ENCODE measurements at regions of chr9 and their contacts with region 1.

Region 1: DNA sequence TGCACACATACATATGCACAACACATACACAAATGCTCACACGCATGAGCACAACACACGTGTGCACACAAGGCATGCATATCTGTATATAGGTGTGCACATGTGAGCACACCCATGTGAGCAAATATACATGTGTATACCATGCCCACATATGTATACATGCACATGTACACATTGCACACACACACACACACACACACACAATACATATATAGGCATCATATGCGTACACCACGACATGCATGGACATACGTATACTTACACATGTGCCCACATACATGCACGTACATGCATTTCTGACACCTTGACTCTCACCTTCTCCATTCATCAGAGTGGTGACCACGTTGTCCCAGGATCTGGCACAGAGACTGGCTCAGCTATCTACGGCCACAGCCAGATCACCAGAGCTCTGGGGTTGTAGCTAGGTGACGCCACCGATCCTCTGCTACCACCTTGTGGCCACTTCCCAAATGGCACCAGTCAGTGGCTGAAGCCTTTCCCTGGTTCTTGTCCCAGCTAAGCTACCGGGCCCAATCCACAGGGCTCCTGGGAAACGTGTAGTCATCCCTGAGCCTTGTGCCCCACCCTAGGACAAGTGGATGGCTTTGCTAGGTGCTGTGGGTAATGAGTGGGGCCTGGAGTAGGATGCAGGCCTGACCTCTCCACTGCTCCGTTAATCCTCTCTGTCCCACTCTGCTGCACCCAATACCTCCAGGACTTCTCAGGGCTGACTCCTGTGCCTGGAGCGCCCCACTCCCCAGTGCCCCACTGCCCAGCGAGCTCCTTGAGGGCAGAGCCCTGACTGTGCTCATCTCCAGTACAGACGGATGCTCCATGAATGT is 194.4 kb downstream of the RGS3 start:
- DNase-seq: peak; percentile 55
- H3K4me3 Mint-ChIP-seq: no peak overlapping the region
- H3K27ac Mint-ChIP-seq: no peak overlapping the region
- H3K4me1 Mint-ChIP-seq: no peaks in the 10 kb centered on the region
- H3K27me3 Mint-ChIP-seq: peaks cover 12% of the 10 kb centered on the region

Region 2: GRCh38 chr9:113309204-113309813 is 348.6 kb before region 1 on chr9:
- intact Hi-C with region 1: loop called (anchors 1 kb)
- DNase-seq: peak; percentile 10
- H3K4me3 Mint-ChIP-seq: no peak overlapping the region
- H3K27ac Mint-ChIP-seq: no peak overlapping the region
- H3K4me1 Mint-ChIP-seq: no peaks in the 10 kb centered on the region
- H3K27me3 Mint-ChIP-seq: peaks cover 8% of the 10 kb centered on the region

Region 3: DNA sequence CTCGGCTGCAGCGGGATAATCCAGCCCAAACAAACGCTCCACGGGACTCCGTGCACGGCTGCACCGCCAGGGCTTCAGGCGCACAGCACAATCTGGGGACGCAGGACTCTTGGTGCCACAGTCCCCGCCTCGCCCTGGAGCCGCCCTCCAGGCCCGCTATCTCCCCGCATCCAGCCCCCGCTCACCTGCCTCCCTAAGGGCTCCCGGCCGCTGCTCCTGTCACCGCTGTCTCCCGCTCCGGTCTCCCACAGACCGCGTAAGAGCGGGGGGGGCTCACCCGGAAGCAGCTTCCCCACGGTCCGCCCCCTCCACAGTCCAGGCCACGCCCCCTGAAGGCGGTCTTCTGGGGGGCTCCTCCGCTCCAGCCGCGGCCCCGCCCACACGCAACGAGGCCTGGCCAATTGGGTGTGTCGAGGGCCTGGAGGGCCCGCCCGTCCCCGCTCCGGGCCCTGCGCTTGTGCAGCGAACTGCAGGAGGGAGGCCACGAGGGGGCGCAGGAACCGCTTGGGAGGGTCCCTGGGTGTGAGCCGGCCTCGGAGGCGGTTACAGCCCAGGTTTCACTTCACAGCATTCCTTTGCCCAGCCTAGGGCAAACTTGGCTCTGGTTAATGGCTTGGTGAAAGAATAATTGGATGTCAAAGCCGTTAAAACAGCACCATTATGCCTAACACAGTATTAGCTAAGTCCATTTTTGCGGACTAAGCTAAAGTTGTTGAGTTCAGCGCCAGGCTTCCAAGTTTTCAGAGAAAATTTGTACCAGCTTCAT is 256.7 kb before region 1 on chr9 and contains the start of gene ALAD:
- intact Hi-C with region 1: loop called (anchors 1 kb)
- DNase-seq: peak; percentile 99
- H3K4me3 Mint-ChIP-seq: peak within 1 kb of the TSS; percentile 89
- H3K27ac Mint-ChIP-seq: peak within 1 kb of the TSS; percentile 67
- H3K4me1 Mint-ChIP-seq: peaks cover 25% of the 10 kb centered on the region
- H3K27me3 Mint-ChIP-seq: no peaks in the 10 kb centered on the region
- total RNA-seq, gene ALAD: 23.0 and 23.7 TPM in 2 replicates

Region 4: GRCh38 chr9:113446323-113446740 is 211.6 kb before region 1 on chr9:
- intact Hi-C with region 1: loop called (anchors 1 kb)
- DNase-seq: no peak
- H3K4me3 Mint-ChIP-seq: no peak overlapping the region
- H3K27ac Mint-ChIP-seq: peak overlapping the region; percentile 37
- H3K4me1 Mint-ChIP-seq: no peaks in the 10 kb centered on the region
- H3K27me3 Mint-ChIP-seq: no peaks in the 10 kb centered on the region

Region 5: DNA sequence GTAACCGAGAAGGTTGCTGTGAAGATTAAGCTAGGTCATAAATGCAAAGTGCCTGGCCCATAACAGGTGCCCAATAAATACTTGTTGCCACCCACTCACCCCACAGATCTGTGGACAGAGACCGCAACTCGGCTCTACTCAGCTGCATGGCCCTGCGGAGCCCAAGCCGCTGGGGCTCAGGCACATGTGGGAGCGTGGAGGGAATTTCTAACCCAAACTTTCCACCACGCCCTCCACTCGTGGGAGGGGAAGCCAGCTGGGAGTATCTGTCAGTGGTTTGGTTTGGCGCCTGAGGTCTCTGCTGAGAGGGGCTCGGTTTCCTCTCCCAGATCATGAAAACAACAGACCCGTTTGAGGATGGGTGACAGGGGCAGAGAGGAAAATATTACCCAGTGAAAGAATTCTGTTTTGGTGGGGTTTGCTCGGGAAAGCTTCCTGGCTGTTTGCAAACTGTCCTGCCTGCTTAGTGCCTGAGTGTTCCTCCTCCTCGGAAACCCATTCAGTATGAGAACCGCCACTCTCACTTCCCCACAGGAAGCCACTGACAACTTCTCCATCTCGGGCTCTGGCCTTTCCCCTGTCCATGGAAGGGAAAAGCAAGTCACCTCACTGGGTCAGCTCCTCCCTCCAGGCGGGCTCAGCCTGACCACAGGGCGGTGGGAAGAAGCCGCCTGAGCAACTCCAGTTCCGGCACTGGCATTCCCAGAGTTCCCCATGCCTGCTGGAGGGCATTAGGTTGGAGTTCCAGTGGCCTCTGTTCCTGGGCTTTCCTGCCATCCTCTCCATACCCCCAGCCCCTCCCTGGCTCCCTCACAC is 134.3 kb before region 1 on chr9:
- intact Hi-C with region 1: loop called (anchors 2 kb)
- DNase-seq: peak; percentile 54
- H3K4me3 Mint-ChIP-seq: peak overlapping the region; percentile 77
- H3K27ac Mint-ChIP-seq: peak overlapping the region; percentile 86
- H3K4me1 Mint-ChIP-seq: peaks cover 85% of the 10 kb centered on the region
- H3K27me3 Mint-ChIP-seq: peaks cover 2% of the 10 kb centered on the region

Region 6: GRCh38 chr9:113591001-113591898 is 66.7 kb before region 1 on chr9:
- intact Hi-C with region 1: loop called (anchors 1 kb)
- DNase-seq: peak; percentile 37
- H3K4me3 Mint-ChIP-seq: no peak overlapping the region
- H3K27ac Mint-ChIP-seq: peak overlapping the region; percentile 34
- H3K4me1 Mint-ChIP-seq: peaks cover 53% of the 10 kb centered on the region
- H3K27me3 Mint-ChIP-seq: no peaks in the 10 kb centered on the region

Region 7: DNA sequence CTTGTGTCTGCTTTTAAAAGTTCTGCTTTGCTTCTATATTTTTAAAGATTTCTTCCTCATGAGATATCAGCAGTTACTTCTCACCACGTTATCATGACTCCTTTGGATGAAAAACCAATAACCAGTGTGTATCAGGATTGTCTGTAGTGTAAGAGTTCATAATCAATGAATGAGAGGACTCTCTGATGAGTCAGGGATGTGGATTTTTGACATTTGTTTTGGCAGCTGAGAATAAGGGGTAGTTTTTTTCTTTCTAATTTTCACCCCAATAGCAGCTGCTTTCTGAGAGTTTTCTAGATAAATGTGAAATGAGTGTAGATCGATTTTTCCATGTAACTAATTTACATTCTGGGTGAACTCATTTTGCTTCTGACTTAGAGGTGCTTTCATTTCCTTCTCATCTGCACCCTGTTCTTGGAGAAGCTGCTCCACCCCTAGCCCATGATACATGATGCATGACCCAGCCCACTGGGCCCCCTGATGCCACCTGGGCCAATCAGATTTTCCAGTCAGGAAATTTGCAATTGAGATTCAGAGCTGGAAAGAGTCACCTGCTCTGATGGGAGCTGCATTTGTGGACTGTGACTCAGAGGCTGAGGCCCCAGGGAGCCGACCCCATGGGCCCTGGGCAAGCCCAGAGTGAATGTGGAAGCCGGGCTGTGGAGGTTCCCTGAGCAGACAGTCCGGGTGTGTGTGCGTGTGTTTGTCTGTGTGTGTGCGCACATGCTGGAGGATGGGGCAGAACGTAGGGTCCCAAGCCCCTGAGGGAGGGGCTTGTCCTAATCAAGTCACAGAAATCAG is 35.1 kb before region 1 on chr9:
- intact Hi-C with region 1: loop called (anchors 2 kb)
- DNase-seq: peak; percentile 18
- H3K4me3 Mint-ChIP-seq: peak overlapping the region; percentile 43
- H3K27ac Mint-ChIP-seq: peak overlapping the region; percentile 93
- H3K4me1 Mint-ChIP-seq: peaks cover 47% of the 10 kb centered on the region
- H3K27me3 Mint-ChIP-seq: peaks cover 2% of the 10 kb centered on the region

Region 8: GRCh38 chr9:113675475-113675941 is 17.6 kb after region 1 on chr9:
- intact Hi-C with region 1: no loop called
- DNase-seq: no peak
- H3K4me3 Mint-ChIP-seq: no peak overlapping the region
- H3K27ac Mint-ChIP-seq: no peak overlapping the region
- H3K4me1 Mint-ChIP-seq: no peaks in the 10 kb centered on the region
- H3K27me3 Mint-ChIP-seq: peaks cover 18% of the 10 kb centered on the region

Region 9: DNA sequence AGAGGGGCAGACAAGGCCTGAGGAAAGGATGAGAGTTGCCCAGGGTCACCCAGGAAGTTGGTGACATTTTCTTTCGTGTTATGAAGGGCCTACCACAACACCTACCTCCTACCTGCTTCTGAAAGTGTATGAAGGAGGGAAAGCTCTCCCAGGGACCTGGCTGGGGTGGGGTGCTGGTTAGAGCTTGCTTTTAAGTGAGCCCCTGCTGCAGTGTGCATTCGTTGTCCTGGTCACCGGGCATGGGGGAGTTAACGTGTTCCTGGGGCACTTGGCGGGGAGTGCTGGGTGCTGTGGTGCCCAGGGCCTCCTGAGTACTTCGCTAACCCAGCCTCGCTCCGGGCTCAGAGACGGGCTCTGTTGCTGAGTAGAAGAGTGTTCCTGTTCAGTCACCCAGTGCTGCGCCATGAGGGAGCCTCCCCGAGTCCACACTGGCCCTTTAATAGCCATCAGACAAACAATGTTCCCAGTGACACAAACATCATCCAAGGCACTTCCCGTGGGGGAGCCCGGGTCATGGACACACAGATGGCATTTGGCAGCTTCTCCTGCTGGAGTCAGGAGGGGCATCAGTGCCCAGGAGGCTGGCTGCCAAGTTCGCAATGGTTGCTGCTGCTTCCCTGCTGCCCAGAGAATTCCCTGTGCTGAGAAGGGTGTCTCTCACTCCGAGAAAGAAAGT is 334.5 kb after region 1 on chr9:
- intact Hi-C with region 1: no loop called
- DNase-seq: no peak
- H3K4me3 Mint-ChIP-seq: no peak overlapping the region
- H3K27ac Mint-ChIP-seq: no peak overlapping the region
- H3K4me1 Mint-ChIP-seq: no peaks in the 10 kb centered on the region
- H3K27me3 Mint-ChIP-seq: peaks cover 4% of the 10 kb centered on the region

Measured in activated T-helper 1 cell treated with anti-CD3 and anti-CD28 coated beads, Interleukin-12 subunit alpha, Interleukin-12 subunit beta, Interleukin-2, Interleukin-4 antibody, amounts not matched to agents 30 ng/mL and 10 ng/mL and 1 ng/mL, durations not matched to agents 14 hours and 24 hours and 36 hours (primary cell).